A673 (cell line): ENCODE measurements at regions of chr19 and their contacts with region 1.

Region 1: GRCh38 chr19:3108775-3109174 is 14.6 kb downstream of the GNA11 start:
- DNase-seq: peak; percentile 77
- H3K4me3 ChIP-seq: no peak overlapping the region
- H3K27ac ChIP-seq: no peak overlapping the region
- H3K4me1 ChIP-seq: no peaks in the 10 kb centered on the region
- H3K27me3 ChIP-seq: no peaks in the 10 kb centered on the region
- CTCF ChIP-seq: peak; percentile 96

Region 2: GRCh38 chr19:2962045-2962561 is 146.7 kb before region 1 on chr19:
- CTCF ChIA-PET with region 1: interaction called, 12 read pairs
- POLR2A ChIA-PET with region 1: interaction called, 4 read pairs
- intact Hi-C with region 1: loop called (anchors 1 kb)
- DNase-seq: peak; percentile 87
- H3K4me3 ChIP-seq: no peak overlapping the region
- H3K27ac ChIP-seq: no peak overlapping the region
- H3K4me1 ChIP-seq: no peaks in the 10 kb centered on the region
- H3K27me3 ChIP-seq: no peaks in the 10 kb centered on the region
- CTCF ChIP-seq: peak; percentile 80

Region 3: GRCh38 chr19:3606690-3607289 is 498.0 kb after region 1 on chr19 and contains the start of gene TBXA2R:
- CTCF ChIA-PET with region 1: no interaction called
- POLR2A ChIA-PET with region 1: no interaction called
- intact Hi-C with region 1: no loop called
- DNase-seq: peak; percentile 72
- H3K4me3 ChIP-seq: peak within 1 kb of the TSS; percentile 31
- H3K27ac ChIP-seq: no peak within 1 kb of the TSS
- H3K4me1 ChIP-seq: peaks cover 11% of the 10 kb centered on the region
- H3K27me3 ChIP-seq: no peaks in the 10 kb centered on the region
- CTCF ChIP-seq: no peak
- total RNA-seq, gene TBXA2R: 0.56 and 0.70 TPM in 2 replicates

Region 4: DNA sequence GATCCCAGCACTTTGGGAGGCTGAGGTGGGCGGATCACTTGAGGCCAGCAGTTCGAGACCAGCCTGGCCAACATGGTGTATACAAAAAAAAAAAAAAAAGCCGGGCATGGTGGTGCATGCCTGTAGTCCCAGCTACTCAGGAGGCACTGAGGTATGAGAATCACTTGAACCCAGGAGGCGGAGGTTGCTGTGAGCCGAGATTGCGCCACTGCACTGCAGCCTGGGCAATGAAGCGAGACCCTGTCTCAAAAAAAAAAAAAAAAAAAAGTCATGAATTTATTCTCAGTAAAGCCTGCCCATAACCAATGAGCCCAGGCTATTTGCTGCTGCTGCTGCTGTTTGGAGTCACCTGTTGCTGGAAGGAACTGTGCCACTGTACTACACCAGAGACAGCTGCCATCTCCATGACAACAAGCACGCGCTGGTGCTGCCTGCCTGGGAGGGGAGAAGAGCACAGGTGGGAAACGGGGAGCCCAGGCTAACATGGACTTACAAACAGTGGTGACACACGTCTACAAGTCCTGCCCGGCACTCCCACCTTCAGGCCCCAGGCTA is 748.8 kb after region 1 on chr19:
- CTCF ChIA-PET with region 1: no interaction called
- POLR2A ChIA-PET with region 1: no interaction called
- intact Hi-C with region 1: no loop called
- DNase-seq: no peak
- H3K4me3 ChIP-seq: no peak overlapping the region
- H3K27ac ChIP-seq: no peak overlapping the region
- H3K4me1 ChIP-seq: no peaks in the 10 kb centered on the region
- H3K27me3 ChIP-seq: no peaks in the 10 kb centered on the region
- CTCF ChIP-seq: no peak